PC-9 (cell line): ENCODE measurements at regions of chr12 and their contacts with region 1.

Region 1: DNA sequence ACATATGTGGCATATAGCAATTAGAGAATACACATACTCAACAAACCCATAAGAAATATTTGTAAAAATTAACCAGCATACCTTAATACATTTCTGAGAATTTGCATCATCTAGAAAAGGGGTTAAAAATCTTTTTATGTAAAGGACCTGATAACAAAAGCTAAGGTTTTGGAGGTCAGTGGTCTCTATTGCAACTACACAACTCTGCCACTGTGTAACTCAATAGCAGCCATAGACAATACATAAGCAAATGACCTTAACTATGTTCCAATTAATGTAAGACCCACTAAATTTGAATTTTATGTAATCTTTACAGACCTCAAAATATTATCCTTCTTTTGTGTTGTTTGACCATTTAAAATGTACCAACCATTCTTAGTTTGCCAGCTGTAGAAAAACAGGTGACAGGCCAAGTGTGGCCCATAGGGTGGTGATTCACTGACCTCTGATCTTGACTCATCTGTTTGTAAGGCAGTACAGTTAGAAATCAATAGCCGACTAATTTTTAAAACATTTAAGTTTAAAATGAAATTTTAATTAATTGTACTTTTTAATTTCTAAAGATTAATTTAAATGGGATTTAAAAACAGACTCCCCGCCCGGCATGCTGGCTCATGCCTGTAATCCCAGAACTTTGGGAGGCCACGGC is 7.4 kb upstream of the EPS8 start:
- DNase-seq: peak; percentile 39 to 79
- H3K4me3 ChIP-seq: peak overlapping the region; percentile 13; the same call in 1 of the 2 replicates
- H3K27ac ChIP-seq: peak overlapping the region; percentile 49
- H3K4me1 ChIP-seq: peaks cover 60% of the 10 kb centered on the region
- H3K27me3 ChIP-seq: no peaks in the 10 kb centered on the region
- CTCF ChIP-seq: no peak

Region 2: DNA sequence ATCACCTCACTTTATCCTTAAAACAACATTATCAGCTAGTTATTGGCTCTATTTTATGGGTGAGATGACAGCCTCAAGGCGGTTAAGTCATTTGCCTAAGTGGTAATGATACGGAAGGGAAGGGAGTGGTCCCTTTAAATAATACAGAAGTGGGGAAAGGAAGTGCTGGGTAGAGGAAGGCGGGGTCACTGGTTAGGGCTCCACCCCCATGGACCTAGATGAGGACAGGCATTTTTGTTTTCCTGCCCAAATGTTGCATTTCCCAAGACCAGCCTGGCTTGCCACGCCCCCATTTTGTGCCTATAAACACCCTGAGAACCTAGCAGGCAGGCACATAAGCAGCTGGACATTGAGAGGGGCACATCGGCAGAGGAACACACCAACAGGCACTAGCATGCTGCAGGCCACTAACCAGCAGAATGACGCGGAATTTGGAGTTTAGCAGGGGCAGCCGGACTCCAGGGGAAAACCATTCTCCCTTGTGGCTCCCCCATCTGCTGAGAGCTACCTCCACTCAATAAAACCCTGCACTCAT is 108.3 kb before region 1 on chr12:
- CTCF ChIA-PET with region 1: interaction called, 26 read pairs
- POLR2A ChIA-PET with region 1: no interaction called
- intact Hi-C with region 1: no loop called
- DNase-seq: no peak
- H3K4me3 ChIP-seq: no peak overlapping the region
- H3K27ac ChIP-seq: no peak overlapping the region
- H3K4me1 ChIP-seq: peaks cover 15% of the 10 kb centered on the region
- H3K27me3 ChIP-seq: no peaks in the 10 kb centered on the region
- CTCF ChIP-seq: no peak

Region 3: GRCh38 chr12:15712823-15713660 is 83.6 kb before region 1 on chr12:
- CTCF ChIA-PET with region 1: no interaction called
- POLR2A ChIA-PET with region 1: no interaction called
- intact Hi-C with region 1: no loop called
- DNase-seq: no peak
- H3K4me3 ChIP-seq: no peak overlapping the region
- H3K27ac ChIP-seq: no peak overlapping the region
- H3K4me1 ChIP-seq: peaks cover 5% of the 10 kb centered on the region; the same call in 1 of the 2 replicates
- H3K27me3 ChIP-seq: no peaks in the 10 kb centered on the region
- CTCF ChIP-seq: no peak

Region 4: GRCh38 chr12:15842108-15842507 is 45.5 kb after region 1 on chr12:
- CTCF ChIA-PET with region 1: no interaction called
- POLR2A ChIA-PET with region 1: interaction called, 29 read pairs
- intact Hi-C with region 1: no loop called
- DNase-seq: no peak
- H3K4me3 ChIP-seq: no peak overlapping the region
- H3K27ac ChIP-seq: no peak overlapping the region
- H3K4me1 ChIP-seq: no peaks in the 10 kb centered on the region
- H3K27me3 ChIP-seq: no peaks in the 10 kb centered on the region
- CTCF ChIP-seq: no peak

Region 5: DNA sequence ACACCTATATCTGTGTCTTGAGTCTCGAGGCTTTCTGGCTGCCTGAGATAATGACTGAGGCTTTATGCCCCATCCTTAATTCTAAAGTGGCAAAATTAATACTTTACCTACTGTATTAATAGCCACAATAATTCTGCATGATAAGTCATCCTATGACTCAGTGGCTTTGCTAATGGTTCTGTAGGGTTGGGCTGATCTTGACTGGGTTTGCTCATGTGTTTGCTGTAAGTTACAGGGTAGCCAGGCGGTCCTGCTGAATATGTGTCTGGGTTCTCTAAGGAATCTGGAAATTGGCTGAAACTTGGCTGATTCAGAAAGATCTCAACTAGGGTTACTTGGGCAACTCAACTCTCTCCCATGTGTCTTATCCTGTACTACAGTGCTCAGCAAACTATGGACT is 572.5 kb after region 1 on chr12:
- CTCF ChIA-PET with region 1: no interaction called
- POLR2A ChIA-PET with region 1: interaction called, 17 read pairs
- intact Hi-C with region 1: no loop called
- DNase-seq: no peak
- H3K4me3 ChIP-seq: no peak overlapping the region
- H3K27ac ChIP-seq: no peak overlapping the region
- H3K4me1 ChIP-seq: no peaks in the 10 kb centered on the region
- H3K27me3 ChIP-seq: no peaks in the 10 kb centered on the region
- CTCF ChIP-seq: no peak